K562 (cell line): ENCODE measurements at regions of chr4 and their contacts with region 1.

Region 1: DNA sequence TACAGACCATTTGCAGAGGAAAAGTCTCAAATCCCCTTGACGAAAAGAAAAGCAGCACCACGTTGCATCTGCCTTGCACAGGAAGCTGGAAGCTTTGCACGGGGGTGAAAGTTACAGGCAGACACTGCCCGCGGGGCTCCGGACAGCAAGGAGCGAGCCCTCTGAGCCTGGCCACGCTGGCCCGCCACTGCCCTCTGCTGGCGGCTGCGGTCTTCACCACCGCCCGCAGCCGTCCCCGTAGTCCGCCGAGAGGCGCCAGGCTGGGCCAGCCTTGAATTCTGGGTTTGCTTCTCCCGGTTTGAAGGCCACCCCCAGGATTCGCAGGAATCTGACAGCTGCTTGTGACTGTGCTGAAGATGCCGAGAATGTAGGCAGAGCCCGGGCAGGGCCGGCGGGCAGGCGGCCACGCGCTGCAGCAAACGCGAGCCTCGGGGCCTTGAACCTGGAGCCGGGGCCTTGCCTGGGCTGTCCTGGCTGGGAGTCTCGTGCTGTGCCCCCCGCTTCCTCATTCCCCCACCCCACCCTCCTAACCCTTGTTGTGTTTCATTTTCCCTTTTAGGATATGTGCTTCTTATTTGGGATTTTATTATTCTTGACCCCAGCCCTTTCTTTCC is 49.2 kb downstream of the ENPP6 start:
- DNase-seq: peak; percentile 74 to 80 (median 78)
- ATAC-seq: peak; percentile 99
- H3K4me3 ChIP-seq: no peak overlapping the region
- H3K27ac ChIP-seq: no peak overlapping the region
- H3K4me1 ChIP-seq: peaks cover 0 to 6% of the 10 kb centered on the region in 2 experiments; a peak in 2 of 5 replicates
- H3K27me3 ChIP-seq: peaks cover 22 to 59% of the 10 kb centered on the region in 2 experiments
- CTCF ChIP-seq: peak; percentile 89 to 96 (median 90)
- EP300 ChIP-seq: no peak
- POLR2A ChIP-seq: no peak
- RAD21 ChIP-seq: peak; percentile 78 to 82

Region 2: GRCh38 chr4:183471946-183472708 is 696.4 kb before region 1 on chr4:
- CTCF ChIA-PET with region 1: no interaction called
- POLR2A ChIA-PET with region 1: no interaction called
- in situ Hi-C with region 1: loop called (anchors 25 kb)
- intact Hi-C with region 1: loop called (anchors 1 kb)
- DNase-seq: peak; percentile 75 to 84 (median 78)
- ATAC-seq: peak; percentile 99
- H3K4me3 ChIP-seq: no peak overlapping the region
- H3K27ac ChIP-seq: no peak overlapping the region
- H3K4me1 ChIP-seq: no peaks in the 10 kb centered on the region
- H3K27me3 ChIP-seq: no peaks in the 10 kb centered on the region
- CTCF ChIP-seq: peak; percentile 66 to 85 (median 83)
- EP300 ChIP-seq: no peak
- POLR2A ChIP-seq: no peak
- RAD21 ChIP-seq: peak; percentile 84

Region 3: DNA sequence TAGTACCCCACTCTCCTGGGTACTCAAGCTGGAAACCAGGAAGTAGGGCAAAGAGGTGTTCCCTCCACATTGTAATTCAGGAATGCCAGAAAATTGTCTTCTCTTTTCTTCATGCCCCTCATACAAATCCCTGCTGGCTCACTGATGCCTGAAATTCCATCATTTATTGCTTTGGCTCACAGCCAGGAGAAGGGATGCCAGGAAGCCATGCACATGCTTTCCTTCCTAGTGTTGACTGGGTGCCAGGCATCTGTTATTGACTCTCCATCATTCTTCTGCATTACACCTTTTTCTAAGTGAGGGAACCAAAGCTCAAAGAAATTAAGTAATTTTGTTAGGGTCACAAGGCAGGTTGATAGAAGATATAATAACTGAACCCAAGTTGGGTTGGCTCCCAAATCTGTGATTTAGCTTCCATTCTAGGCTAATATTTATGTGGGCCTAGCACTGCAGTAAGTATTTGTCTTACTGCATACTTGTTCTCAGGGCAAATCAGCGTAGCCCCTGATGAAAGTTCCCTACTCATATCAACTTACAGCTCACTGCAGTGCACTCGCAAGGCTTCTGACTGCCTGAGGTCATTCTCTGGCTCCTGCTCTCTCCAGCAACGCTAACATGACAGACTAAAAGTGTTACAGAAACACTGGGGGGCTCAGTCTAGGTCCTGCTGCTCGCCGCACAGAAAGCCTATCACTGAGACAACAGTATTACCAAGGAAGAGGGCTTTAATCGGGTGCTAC is 420.4 kb before region 1 on chr4:
- CTCF ChIA-PET with region 1: no interaction called
- POLR2A ChIA-PET with region 1: no interaction called
- in situ Hi-C with region 1: no loop called
- intact Hi-C with region 1: loop called (anchors 5 kb)
- DNase-seq: no peak
- ATAC-seq: no peak
- H3K4me3 ChIP-seq: no peak overlapping the region
- H3K27ac ChIP-seq: no peak overlapping the region
- H3K4me1 ChIP-seq: no peaks in the 10 kb centered on the region
- H3K27me3 ChIP-seq: peaks cover 15 to 19% of the 10 kb centered on the region in 2 experiments
- CTCF ChIP-seq: no peak
- EP300 ChIP-seq: no peak
- POLR2A ChIP-seq: no peak
- RAD21 ChIP-seq: no peak

Region 4: DNA sequence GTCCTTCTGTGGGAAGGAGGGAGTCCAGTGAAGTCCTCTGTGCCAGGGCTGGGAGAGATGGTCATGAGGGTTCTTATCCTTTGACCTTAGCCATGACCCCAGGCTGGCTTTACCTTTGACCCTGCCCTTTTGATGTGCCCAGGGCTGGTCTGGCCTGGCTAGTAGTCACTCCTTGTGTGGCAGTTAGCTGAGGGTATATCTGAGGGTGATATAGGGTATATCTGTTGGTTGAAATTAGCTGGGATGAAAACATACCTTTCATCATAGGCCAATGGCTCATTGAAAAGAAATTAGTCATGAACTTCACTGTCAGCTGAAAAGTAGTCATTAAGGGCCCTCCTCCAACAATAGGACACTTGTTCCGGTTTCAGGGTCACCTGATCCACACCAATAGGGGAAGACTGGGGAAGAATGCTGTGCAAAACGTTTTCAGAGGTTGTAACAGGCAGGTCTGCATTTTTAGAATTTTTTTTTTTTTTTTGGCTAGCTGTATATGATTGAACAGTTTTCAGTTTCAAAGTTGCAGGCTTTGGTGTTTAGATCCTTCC is 338.0 kb before region 1 on chr4:
- CTCF ChIA-PET with region 1: no interaction called
- POLR2A ChIA-PET with region 1: no interaction called
- in situ Hi-C with region 1: loop called (anchors 5 kb)
- intact Hi-C with region 1: no loop called
- DNase-seq: no peak
- ATAC-seq: no peak
- H3K4me3 ChIP-seq: no peak overlapping the region
- H3K27ac ChIP-seq: no peak overlapping the region
- H3K4me1 ChIP-seq: no peaks in the 10 kb centered on the region
- H3K27me3 ChIP-seq: peaks cover 20 to 30% of the 10 kb centered on the region in 2 experiments
- CTCF ChIP-seq: no peak
- EP300 ChIP-seq: no peak
- POLR2A ChIP-seq: no peak
- RAD21 ChIP-seq: no peak

Region 5: DNA sequence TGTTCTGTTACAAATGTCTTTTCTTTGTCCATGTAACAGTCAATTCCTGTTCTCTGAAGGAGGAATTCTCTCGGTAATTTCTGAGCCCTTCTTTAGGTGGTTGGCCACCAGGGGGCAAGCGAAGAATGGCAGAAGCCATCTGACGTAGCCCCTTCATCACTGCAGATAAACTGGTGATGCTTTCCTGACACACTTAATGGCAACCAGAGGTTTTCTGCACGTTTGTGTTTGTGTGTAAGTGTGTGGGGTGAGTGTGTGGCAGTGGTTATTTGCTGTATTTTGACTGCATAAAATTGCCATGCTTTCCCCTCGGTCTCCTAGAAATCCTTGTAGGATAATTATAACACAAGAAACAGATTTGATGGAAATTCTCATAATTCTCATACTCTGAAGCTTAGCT is 328.2 kb before region 1 on chr4:
- CTCF ChIA-PET with region 1: interaction called, 8 read pairs
- POLR2A ChIA-PET with region 1: no interaction called
- in situ Hi-C with region 1: no loop called
- intact Hi-C with region 1: loop called (anchors 1 kb)
- DNase-seq: peak; percentile 62 to 78 (median 65)
- ATAC-seq: peak; percentile 93
- H3K4me3 ChIP-seq: no peak overlapping the region
- H3K27ac ChIP-seq: no peak overlapping the region
- H3K4me1 ChIP-seq: no peaks in the 10 kb centered on the region
- H3K27me3 ChIP-seq: peaks cover 0 to 5% of the 10 kb centered on the region in 2 experiments; a peak in 2 of 5 replicates
- CTCF ChIP-seq: peak; percentile 81 to 88 (median 82)
- EP300 ChIP-seq: no peak
- POLR2A ChIP-seq: no peak
- RAD21 ChIP-seq: peak; percentile 90 to 91

Region 6: DNA sequence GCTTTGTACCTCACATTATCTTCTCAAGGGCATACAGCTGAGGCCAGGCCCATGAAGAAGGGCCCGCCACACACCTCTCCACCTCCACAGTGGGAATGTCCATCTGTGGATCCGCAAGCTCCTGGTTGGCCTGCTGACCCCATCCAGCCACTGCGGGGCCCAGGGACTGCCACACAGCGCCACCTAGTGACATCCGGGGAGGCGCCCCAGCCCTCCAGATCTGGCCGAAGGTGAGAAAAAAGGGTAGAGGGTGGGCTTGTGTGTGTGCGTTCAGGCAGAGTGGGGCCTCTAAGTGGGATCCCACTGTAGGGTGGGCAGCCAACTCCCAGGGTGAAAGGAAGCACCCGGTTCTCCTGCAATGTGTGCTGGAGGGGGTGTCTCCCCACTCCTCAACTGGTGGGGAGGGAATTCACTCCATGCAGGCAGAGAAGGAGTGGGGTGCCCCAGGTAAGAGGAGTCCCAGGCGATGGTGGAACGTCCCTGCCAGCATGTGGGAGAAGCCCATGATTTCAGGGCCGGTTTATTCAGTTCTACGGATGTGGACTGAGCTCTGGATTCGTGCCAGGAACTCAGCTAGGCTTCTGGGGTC is 68.1 kb before region 1 on chr4:
- CTCF ChIA-PET with region 1: interaction called, 4 read pairs
- POLR2A ChIA-PET with region 1: no interaction called
- in situ Hi-C with region 1: no loop called
- intact Hi-C with region 1: loop called (anchors 5 kb)
- DNase-seq: peak; percentile 57 to 74 (median 71)
- ATAC-seq: peak; percentile 95
- H3K4me3 ChIP-seq: no peak overlapping the region
- H3K27ac ChIP-seq: no peak overlapping the region
- H3K4me1 ChIP-seq: peaks cover 0 to 5% of the 10 kb centered on the region in 2 experiments; a peak in 2 of 5 replicates
- H3K27me3 ChIP-seq: peaks cover 2 to 54% of the 10 kb centered on the region in 2 experiments
- CTCF ChIP-seq: peak; percentile 82 to 88 (median 87)
- EP300 ChIP-seq: no peak
- POLR2A ChIP-seq: no peak
- RAD21 ChIP-seq: peak; percentile 78 to 79

Region 7: GRCh38 chr4:184250795-184251669 is 82.5 kb after region 1 on chr4:
- CTCF ChIA-PET with region 1: interaction called, 4 read pairs
- POLR2A ChIA-PET with region 1: no interaction called
- in situ Hi-C with region 1: no loop called
- intact Hi-C with region 1: loop called (anchors 2 kb)
- DNase-seq: peak; percentile 57 to 69 (median 62)
- ATAC-seq: peak; percentile 97
- H3K4me3 ChIP-seq: no peak overlapping the region
- H3K27ac ChIP-seq: no peak overlapping the region
- H3K4me1 ChIP-seq: peaks cover 0 to 6% of the 10 kb centered on the region in 2 experiments; a peak in 2 of 5 replicates
- H3K27me3 ChIP-seq: peaks cover 5 to 14% of the 10 kb centered on the region in 2 experiments; a peak in 3 of 5 replicates
- CTCF ChIP-seq: peak; percentile 54 to 69 (median 61); a peak in 5 of 6 replicates
- EP300 ChIP-seq: no peak
- POLR2A ChIP-seq: no peak
- RAD21 ChIP-seq: peak; percentile 49 to 58